ENCODE measurements at regions of chr3 and their contacts with region 1.

Region 1: DNA sequence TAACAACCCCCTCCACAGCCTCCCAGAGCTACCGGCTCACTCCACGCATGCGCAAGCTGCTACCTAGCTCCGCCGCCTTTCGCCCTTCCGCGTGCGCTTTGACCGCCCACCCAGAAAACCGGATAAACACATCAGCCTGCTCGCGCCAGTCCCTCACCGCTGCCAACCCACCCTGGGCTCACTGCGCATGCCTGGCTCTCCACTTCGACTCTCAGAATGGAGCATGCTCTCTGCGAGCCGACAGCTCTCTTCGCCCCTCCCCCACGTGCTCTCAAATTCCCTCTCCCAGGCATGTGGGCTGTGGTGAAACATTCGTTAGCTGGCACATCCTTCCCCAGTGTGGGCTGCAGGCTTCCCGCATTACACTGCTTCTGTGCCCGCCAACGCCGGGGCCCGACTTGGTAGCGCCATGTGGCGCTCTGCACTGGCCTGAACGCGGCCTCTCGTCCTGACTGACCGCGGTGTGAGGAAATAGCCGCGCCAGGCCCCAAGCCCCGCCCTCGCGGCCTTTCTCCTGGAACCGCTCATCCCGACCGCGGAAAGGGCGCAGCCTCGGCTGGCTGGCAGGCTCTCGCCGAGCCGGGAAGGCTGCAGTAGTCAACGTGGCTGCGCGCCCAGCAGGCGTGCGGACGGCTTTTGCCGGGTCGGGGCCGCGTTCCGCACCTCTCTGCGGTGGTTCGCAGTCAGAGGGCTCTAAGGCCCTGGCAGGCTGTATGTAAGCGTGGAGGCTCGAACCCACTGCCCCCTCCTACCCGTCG is 445 bp upstream of the MSL2 start:
- DNase-seq: peak; percentile 100
- H3K4me3 ChIP-seq: peak overlapping the region; percentile 91
- H3K27ac ChIP-seq: peak overlapping the region; percentile 91
- H3K4me1 ChIP-seq: peaks cover 18% of the 10 kb centered on the region
- CTCF ChIP-seq: no peak

Region 2: DNA sequence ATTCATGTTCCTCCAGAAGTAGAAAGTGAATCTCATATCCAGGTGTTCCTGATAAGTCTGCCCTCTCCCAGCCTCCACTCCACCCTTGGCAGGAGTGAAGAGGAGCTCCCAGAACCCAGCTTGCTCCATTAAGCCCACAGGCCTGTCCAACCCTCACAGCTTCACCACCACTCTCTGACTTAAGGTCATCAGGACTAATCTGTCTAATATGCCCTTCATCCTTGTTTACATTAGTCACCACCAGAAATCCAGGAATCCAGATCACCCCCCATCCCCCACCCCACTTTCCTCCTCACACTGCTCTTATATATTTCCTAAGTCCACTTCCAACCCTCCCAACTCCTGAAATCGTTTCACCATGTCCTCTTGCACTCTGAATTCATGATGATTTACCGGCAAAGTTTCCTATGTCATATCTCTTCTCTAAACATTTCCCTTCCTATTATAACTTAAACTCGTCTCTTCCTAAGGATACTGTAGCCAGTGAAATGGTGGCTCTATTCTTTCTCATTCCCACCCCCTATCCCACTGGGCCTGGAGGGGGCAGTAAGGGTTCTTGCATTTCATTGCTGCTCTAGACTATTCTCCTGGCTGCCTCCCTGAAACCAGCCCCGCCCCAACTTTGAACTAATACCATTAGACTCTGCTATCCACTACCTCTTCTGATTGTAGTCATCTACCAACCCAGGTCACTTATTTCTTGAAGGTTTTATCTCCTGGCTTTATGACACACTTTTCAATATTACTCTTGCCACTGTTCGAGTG is 187.7 kb before region 1 on chr3:
- CTCF ChIA-PET with region 1: no interaction called
- POLR2A ChIA-PET with region 1: no interaction called
- intact Hi-C with region 1: no loop called
- DNase-seq: no peak
- H3K4me3 ChIP-seq: no peak overlapping the region
- H3K27ac ChIP-seq: no peak overlapping the region
- H3K4me1 ChIP-seq: no peaks in the 10 kb centered on the region
- CTCF ChIP-seq: no peak

Region 3: GRCh38 chr3:136075218-136075808 is 121.3 kb before region 1 on chr3:
- CTCF ChIA-PET with region 1: no interaction called
- POLR2A ChIA-PET with region 1: no interaction called
- intact Hi-C with region 1: loop called (anchors 2 kb)
- DNase-seq: peak; percentile 76
- H3K4me3 ChIP-seq: no peak overlapping the region
- H3K27ac ChIP-seq: no peak overlapping the region
- H3K4me1 ChIP-seq: no peaks in the 10 kb centered on the region
- CTCF ChIP-seq: peak; percentile 99

Region 4: DNA sequence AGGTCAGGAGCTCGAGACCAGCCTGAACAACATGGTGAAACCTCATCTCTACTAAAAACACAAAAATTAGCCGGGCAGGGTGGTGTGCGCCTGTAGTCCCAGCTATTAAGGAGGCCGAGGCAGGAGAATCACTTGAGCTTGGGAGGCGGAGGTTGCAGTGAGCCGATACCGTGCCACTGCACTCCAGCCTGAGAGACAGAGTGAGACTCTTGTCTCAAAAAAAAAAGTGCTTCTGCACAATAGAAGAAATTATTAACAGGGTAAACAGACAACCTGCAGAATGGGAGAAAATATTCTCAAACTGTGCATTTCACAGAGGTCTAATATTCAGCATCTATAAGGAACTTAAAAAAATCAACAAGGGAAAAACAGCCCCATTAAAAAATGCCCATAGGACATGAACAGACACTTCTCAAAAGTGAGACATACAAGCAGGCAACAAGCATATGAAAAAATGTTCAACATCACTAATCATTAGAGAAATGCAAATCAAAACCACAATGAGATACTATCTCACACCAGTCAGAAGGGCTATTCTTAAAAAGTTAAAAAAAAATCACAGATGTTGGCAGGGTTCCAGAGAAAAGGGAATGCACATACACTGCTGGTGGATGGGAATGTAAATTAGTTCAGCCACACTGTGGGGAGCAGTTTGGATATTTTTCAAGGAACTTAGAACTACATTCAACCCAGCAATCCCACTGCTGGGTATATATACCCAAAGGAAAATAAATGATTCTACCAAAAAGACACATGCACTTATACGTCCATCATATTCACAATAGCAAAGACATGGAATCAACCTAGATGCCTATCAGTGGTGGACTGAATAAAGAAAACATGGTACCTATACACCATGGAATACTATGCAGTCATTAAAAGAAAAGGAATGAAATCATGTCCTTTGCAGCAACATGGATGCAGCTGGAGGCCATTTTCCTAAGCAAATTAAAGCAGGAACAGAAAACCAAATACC is 75.9 kb before region 1 on chr3:
- CTCF ChIA-PET with region 1: no interaction called
- POLR2A ChIA-PET with region 1: no interaction called
- intact Hi-C with region 1: no loop called
- DNase-seq: no peak
- H3K4me3 ChIP-seq: no peak overlapping the region
- H3K27ac ChIP-seq: no peak overlapping the region
- H3K4me1 ChIP-seq: peaks cover 4% of the 10 kb centered on the region
- CTCF ChIP-seq: no peak

Region 5: GRCh38 chr3:136146981-136147729 is 49.4 kb before region 1 on chr3:
- CTCF ChIA-PET with region 1: no interaction called
- POLR2A ChIA-PET with region 1: interaction called, 12 read pairs
- intact Hi-C with region 1: no loop called
- DNase-seq: no peak
- H3K4me3 ChIP-seq: no peak overlapping the region
- H3K27ac ChIP-seq: no peak overlapping the region
- H3K4me1 ChIP-seq: peaks cover 6% of the 10 kb centered on the region
- CTCF ChIP-seq: no peak

Region 6: DNA sequence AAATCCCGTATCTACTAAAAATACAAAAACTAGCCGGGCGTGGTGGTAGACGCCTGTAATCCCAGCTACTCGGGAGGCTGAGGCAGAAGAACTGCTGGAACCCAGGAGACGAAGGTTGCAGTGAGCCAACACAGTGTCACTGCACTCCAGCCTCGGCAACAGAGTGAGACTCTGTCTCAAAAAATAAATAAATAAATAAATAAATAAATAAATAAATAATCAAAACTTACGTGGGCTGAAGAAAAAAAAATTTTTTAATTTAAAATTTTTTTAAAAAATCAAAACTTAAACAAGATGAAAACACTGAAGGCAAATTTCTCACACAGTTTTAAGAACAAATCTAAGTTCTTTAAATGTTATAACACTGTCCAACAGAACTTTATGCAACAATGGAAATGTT is 14.8 kb before region 1 on chr3:
- CTCF ChIA-PET with region 1: no interaction called
- POLR2A ChIA-PET with region 1: interaction called, 11 read pairs
- intact Hi-C with region 1: no loop called
- DNase-seq: no peak
- H3K4me3 ChIP-seq: no peak overlapping the region
- H3K27ac ChIP-seq: no peak overlapping the region
- H3K4me1 ChIP-seq: peaks cover 37% of the 10 kb centered on the region
- CTCF ChIP-seq: no peak

Region 7: GRCh38 chr3:136281966-136282520 is 85.5 kb after region 1 on chr3:
- CTCF ChIA-PET with region 1: no interaction called
- POLR2A ChIA-PET with region 1: interaction called, 10 read pairs
- intact Hi-C with region 1: no loop called
- DNase-seq: peak; percentile 46
- H3K4me3 ChIP-seq: peak overlapping the region; percentile 23
- H3K27ac ChIP-seq: peak overlapping the region; percentile 51
- H3K4me1 ChIP-seq: peaks cover 19% of the 10 kb centered on the region
- CTCF ChIP-seq: no peak

Region 8: DNA sequence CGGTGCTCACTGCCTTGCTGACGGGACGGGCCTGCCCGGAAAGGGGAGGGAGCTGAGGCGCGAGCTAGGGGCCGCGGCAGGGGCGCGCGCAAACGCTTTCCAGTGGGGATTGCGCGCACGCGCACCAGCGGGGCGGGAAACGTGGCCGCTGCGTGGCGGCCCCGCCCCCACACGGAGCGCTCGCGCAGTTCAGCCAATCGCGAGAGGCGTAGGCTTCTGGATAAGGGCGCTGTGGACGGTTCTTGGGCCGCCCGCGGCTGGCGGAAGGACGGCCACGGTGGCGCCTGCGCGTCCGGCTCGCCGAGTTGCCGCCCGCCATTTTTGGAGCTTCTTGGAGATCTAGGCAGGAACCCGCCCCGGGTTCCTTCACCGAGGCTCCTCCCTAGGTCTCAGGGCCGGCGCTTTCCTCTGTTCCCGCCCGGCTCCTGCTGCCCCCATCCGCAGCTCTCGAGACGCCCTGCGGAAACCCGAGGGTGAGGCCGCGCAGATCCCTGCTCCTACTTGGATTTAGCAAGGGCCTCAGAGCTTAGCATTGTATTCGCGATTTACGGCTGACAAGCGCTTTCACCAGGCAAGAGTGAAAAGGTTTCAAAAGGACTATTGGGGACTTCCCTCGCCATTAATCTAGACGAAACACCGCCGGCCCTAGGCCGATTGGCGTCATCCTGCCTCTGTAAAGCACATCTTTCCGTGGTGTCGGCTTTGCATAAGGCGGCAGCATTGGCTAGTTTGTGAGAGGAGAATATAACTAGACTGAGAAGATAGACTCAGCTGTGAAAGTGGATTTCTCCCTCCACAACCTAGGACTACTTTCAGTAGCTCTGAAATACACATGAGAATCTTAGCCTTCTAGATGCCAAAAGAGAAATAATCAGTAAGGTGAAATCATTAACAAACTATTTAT is 556.1 kb after region 1 on chr3:
- CTCF ChIA-PET with region 1: interaction called, 3 read pairs
- POLR2A ChIA-PET with region 1: interaction called, 4 read pairs
- intact Hi-C with region 1: loop called (anchors 1 kb)
- DNase-seq: peak; percentile 99
- H3K4me3 ChIP-seq: peak overlapping the region; percentile 90
- H3K27ac ChIP-seq: peak overlapping the region; percentile 94
- H3K4me1 ChIP-seq: peaks cover 33% of the 10 kb centered on the region
- CTCF ChIP-seq: no peak; the same call in 1 of the 2 replicates